Activated B cell treated with CpG ODN at 0.5 μM for 24 hours (primary cell): ENCODE measurements at regions of chr2 and their contacts with region 1.

Region 1: GRCh38 chr2:70516596-70516995 is 37.0 kb downstream of the TGFA start:
- DNase-seq: no peak
- ATAC-seq: peak; percentile 92
- H3K4me3 Mint-ChIP-seq: no peak overlapping the region
- H3K27ac Mint-ChIP-seq: peak overlapping the region; percentile 33
- H3K4me1 Mint-ChIP-seq: peaks cover 12% of the 10 kb centered on the region
- H3K27me3 Mint-ChIP-seq: no peaks in the 10 kb centered on the region
- CTCF ChIP-seq: no peak

Region 2: DNA sequence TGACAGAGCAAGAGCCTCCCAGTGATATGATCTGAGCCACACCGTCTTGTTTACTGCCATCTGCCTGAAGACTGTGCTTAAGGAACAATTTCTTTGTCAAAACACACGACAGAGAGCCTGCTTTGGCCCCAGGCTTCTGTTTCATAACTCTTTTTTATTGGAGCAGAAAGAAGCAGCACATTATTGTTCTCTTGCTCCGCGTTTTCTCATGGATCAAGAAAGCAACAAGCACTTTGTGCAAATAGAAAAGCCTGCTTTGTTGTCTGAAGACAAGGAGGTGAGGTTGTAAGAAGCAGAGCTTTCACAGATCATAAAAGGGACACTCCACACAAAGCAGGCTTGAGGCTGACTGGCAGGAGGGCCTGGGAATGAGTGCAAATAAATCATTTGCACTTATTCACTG is 96.5 kb before region 1 on chr2:
- CTCF ChIA-PET with region 1: no interaction called
- POLR2A ChIA-PET with region 1: no interaction called
- intact Hi-C with region 1: no loop called
- DNase-seq: no peak
- ATAC-seq: no peak
- H3K4me3 Mint-ChIP-seq: no peak overlapping the region
- H3K27ac Mint-ChIP-seq: no peak overlapping the region
- H3K4me1 Mint-ChIP-seq: peaks cover 2% of the 10 kb centered on the region
- H3K27me3 Mint-ChIP-seq: peaks cover 19% of the 10 kb centered on the region
- CTCF ChIP-seq: no peak

Region 3: GRCh38 chr2:70480468-70480867 is 36.1 kb before region 1 on chr2:
- CTCF ChIA-PET with region 1: no interaction called
- POLR2A ChIA-PET with region 1: no interaction called
- intact Hi-C with region 1: loop called (anchors 1 kb)
- DNase-seq: no peak
- ATAC-seq: peak; percentile 79
- H3K4me3 Mint-ChIP-seq: peak overlapping the region; percentile 6
- H3K27ac Mint-ChIP-seq: peak overlapping the region; percentile 54
- H3K4me1 Mint-ChIP-seq: peaks cover 34% of the 10 kb centered on the region
- H3K27me3 Mint-ChIP-seq: no peaks in the 10 kb centered on the region
- CTCF ChIP-seq: no peak